Psoas muscle (tissue), 8 donors: ENCODE measurements at regions of chr2 and their contacts with region 1.

Region 1: DNA sequence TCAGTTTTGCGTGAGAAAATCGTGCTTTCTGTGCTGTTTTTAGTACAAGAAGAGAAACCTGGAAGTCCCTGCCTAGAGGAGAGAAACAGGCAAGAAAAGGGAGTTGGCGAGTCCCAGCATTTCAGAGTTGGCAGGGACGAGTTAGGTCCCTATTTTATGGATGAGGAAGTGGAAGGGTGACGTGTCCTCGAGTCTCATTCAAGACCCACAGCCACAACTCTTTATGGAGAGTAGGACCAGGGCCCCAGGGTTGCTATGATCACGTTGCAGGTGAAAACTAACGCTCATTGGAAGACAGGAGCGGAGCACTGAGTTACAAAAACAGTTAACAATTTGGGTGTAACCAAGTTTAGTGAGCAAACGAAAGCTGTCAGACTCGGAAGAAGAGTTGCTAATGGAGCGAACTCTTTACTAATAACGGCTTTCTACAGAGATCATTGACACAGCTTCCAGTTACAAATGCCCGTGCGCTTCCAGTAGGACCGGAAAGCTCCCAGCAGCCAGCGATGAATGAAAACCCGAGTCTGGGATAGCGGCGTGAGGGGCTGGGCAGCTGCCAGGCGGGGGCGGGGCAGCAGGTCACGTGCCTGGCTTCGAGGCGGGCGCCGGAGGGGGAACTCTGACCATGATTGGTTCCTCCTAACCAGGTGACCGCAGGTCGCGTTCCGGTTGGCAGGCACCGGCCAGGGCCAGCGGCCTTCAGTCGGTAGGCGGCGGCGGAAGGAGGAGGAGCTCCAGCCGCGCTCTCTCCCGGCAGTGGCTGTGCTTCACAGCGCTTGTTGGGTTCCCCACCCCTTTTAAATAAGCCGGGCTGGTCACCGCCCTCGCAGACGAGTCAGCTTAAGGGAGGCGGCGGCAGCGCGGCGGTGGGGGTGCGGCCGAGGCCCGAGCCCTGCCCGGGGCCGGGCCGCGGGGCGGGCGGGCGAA is at the start of gene CCNYL1:
- DNase-seq: peak; percentile 98 to 100
- ATAC-seq: peak; percentile 99 to 100 (median 100)
- H3K4me3 ChIP-seq: peak within 1 kb of the TSS; percentile 86
- H3K27ac ChIP-seq: peak within 1 kb of the TSS; percentile 87
- H3K4me1 ChIP-seq: peaks cover 14% of the 10 kb centered on the region
- H3K27me3 ChIP-seq: no peaks in the 10 kb centered on the region
- CTCF ChIP-seq: peak; percentile 32
- total RNA-seq, gene CCNYL1: 6.8 to 9.7 (median 7.6) TPM

Region 2: DNA sequence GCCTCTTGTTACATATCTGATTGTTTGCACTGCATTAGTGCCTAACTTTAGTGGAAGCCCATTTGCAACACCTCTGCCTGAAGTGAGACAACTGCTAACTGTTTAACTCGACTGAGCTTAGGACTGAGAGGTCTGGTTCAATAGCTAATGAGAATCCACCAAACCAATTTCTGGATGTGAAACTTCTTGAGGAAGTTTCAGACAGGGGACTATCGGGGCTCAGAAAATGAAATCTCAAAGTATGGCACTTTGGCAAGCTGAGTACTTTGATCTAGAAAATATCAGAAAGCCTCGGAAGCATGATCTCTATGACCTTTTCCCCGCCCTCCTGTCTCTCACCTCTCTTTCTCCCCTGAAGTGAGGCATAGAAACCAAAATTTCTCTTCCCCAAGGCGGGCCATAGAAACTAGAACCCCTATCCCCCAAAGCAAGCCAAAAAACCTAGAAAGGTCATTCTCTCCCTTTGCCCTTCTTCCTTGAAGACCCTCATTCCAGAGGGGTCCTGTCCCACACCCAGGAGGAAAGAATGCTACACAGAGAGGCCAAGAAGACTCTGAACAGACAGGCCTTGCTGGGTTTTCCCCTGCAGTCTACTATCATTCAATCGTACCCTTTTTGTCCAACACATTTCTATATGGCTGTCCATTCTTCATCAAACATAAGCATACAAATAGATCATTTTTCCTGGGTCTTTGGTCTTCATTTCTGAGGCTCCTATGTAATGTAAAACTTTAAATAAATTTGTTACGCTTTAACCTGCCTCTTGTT is 250.9 kb before region 1 on chr2:
- intact Hi-C with region 1: no loop called
- DNase-seq: no peak
- ATAC-seq: no peak
- H3K4me3 ChIP-seq: no peak overlapping the region
- H3K27ac ChIP-seq: no peak overlapping the region
- H3K4me1 ChIP-seq: no peaks in the 10 kb centered on the region
- H3K27me3 ChIP-seq: no peaks in the 10 kb centered on the region
- CTCF ChIP-seq: no peak

Region 3: DNA sequence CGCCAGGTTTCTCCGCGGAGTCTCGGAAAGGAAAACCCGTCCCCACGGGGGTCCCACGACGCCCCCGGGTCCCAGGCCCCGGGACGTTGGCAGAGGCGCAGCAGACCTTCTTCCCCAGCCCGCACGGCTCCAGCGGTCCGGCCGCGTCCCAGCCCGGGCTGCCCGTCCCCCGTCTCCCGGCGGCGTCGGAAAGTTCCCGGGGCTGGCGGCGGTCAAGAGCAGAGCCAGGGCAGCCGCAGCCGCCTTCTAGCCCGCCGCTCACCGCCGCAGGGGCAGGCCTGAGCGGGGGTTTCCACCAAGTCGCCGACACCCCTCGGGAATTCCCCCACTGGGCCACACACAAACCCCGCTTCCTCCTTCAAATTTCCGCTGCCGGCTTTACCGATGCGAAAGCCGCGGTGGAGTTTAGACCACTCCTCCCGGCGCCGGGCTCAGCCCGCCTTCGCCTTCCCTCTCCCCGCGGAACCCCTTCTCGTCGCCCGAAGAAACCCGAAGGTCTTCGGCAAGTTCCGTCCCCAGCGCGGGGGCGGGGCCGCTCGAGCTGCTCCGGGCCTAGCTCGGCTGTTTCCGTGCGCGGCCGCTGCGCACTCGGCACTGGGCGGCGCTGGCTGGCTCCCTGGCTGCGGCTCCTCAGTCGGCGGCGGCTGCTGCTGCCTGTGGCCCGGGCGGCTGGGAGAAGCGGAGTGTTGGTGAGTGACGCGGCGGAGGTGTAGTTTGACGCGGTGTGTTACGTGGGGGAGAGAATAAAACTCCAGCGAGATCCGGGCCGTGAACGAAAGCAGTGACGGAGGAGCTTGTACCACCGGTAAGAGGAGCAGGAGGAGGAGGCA is 181.5 kb before region 1 on chr2 and contains the start of gene CREB1:
- intact Hi-C with region 1: loop called in 1 of 2 experiments (anchors 5 kb)
- DNase-seq: peak; percentile 99
- ATAC-seq: peak; percentile 96 to 98 (median 97)
- H3K4me3 ChIP-seq: peak within 1 kb of the TSS; percentile 89
- H3K27ac ChIP-seq: peak within 1 kb of the TSS; percentile 92
- H3K4me1 ChIP-seq: peaks cover 29% of the 10 kb centered on the region
- H3K27me3 ChIP-seq: no peaks in the 10 kb centered on the region
- CTCF ChIP-seq: no peak
- total RNA-seq, gene CREB1: 18.4 to 27.9 (median 22.9) TPM

Region 4: DNA sequence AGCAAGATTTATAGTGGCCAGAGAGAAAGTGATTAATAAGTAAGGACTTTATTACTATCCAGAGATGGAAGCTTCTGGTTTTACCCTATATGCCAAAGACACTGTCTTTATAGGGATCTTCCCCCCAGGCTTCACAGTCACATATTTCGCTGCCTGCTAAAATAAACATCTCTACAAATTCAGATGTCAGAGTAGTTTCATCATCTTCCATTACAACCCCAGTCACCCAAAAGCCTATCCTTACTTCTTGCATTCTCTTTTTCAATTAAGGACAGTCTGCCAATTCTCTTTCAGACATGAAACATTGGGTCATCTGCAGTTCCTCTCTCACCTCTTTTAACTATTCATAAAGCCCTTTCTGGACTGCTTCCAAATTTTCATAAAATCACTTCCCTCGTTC is 153.0 kb before region 1 on chr2:
- intact Hi-C with region 1: loop called in 1 of 2 experiments (anchors 10 kb)
- DNase-seq: no peak
- ATAC-seq: no peak
- H3K4me3 ChIP-seq: no peak overlapping the region
- H3K27ac ChIP-seq: no peak overlapping the region
- H3K4me1 ChIP-seq: peaks cover 45% of the 10 kb centered on the region
- H3K27me3 ChIP-seq: no peaks in the 10 kb centered on the region
- CTCF ChIP-seq: no peak

Region 5: DNA sequence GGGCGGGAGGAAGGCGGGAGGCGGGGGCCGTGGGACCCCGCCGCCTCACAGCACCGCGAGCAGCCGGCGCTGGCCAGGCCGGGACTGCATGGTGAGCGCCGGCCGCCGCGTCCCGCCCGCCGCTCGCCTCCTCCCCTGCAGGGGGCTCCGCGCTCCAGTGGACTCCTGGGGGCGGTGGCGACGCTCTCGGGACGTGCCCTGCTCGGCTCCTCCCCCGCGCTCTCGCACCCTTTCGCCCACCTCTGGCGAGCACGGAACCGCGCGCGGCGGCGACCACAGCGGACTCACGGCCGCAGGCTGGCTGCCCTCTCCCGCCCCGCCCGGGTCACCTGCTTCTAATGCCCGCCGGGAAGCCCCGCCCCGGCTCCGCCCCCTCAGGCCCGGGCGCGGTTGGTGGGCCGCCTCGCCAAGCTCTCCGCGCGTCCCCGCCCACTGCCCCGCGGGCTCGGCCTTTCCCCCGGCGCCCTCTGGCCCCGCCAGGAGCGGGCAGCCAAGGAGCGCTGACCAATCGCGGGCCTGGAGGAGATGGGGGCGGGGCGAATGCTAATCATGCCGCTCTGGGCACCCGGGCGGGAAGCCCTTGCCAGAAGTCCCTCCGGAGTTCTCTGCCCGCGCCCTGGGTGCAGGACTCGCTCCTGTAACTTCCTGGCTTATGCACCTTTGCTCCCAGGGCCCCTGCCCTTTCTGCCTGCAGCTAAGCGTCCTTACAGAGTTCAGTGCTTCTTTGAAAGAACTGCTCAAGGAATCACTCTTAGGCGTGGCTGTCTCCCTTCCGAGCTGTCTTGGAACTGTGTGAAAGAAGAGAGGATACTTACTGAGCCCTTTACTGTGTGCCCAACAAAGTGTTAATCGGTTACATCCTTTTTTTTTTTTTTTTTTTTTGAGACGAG is 58.8 kb after region 1 on chr2 and contains the start of gene FZD5:
- intact Hi-C with region 1: no loop called
- DNase-seq: peak; percentile 96 to 98
- ATAC-seq: peak; percentile 93 to 96 (median 94)
- H3K4me3 ChIP-seq: peak within 1 kb of the TSS; percentile 93
- H3K27ac ChIP-seq: peak within 1 kb of the TSS; percentile 86
- H3K4me1 ChIP-seq: peaks cover 7% of the 10 kb centered on the region
- H3K27me3 ChIP-seq: no peaks in the 10 kb centered on the region
- CTCF ChIP-seq: peak; percentile 58
- total RNA-seq, gene FZD5: 2.5 to 3.5 (median 2.7) TPM